Posterior cingulate gyrus (tissue), 11 donors: ENCODE measurements at regions of chr7 and their contacts with region 1.

Region 1: GRCh38 chr7:107471292-107472070 is 1.6 kb downstream of the GPR22 start:
- DNase-seq: no peak

Region 2: DNA sequence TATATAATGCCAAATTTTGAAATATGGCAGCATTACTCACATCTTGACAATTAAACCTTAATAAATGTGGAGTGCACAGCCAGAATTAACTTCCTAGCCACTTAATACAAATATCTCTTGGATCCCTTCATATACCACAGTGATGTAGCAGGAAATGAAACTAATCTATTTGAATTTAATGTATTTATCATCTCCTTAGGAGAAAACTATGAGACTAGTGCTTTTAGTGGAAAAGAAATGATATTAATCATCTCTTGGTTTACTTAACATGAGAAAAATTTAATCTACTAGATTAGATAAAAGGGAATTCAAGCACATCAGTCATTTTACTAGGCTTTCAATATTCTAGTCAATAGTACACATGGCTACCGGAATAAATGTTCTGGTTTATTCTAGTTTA is 57.3 kb before region 1 on chr7:
- intact Hi-C with region 1: no loop called
- DNase-seq: no peak

Region 3: GRCh38 chr7:107579885-107580715 is 108.6 kb after region 1 on chr7 and contains the start of gene BCAP29:
- intact Hi-C with region 1: loop called (anchors 10 kb)
- DNase-seq: peak; percentile 35 to 95 (median 58)